Motor neuron (in vitro differentiated cells): ENCODE measurements at regions of chr7 and their contacts with region 1.

Region 1: DNA sequence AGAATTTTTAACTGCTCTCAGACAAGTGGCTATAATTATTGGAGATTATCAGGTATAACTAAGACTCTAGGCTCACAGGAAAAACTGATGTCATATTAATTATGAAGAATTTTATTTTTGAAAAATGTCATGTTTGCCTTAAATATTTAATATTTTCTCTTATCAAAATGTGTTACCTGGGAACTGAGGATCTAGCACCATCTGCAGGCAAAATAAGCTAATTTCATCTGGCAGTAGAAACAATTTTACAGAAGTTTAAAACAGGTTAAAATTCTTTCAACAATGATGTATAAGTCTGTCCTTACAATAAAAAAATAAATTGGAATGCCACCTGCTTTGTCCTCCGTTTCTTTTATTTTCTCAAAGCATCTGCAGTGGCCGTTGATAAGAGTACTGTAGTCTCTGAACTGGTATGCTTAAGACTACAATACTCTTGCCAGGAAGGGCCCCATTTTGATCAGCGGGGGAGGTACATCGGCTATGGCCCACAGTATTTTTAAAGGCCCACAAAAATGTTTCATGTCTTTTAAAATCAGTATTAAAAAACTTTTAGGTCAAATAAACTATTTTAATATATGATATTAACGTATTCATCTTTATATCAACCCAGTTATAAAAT is 81.3 kb downstream of the VWDE start:
- ATAC-seq: no peak
- H3K4me3 ChIP-seq: no peak overlapping the region
- H3K27ac ChIP-seq: no peak overlapping the region
- H3K4me1 ChIP-seq: peaks cover 4 to 14% of the 10 kb centered on the region in 2 donors

Region 2: DNA sequence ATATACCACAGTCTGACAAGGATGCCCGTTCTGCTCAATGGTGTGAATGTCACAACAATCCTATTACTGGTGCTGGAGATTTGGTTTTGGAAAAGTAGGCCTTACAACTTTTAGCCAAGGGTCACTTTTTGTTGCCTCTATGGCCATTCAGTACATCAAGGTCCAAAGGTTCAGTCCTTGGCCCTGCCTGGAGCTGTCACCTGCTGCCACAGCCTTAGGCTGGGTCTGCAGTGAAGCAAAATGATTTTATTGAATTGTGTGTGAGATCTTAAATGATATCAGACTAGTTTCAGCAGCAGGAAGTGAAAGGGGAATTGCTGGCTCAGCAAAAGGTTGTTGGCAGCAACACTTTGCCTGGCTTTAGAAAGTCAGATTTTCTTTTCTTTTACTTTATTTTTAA is 918.0 kb before region 1 on chr7:
- in situ Hi-C with region 1: loop called in 2 of 9 experiments (anchors 25 kb)
- ATAC-seq: no peak
- H3K4me3 ChIP-seq: no peak overlapping the region
- H3K27ac ChIP-seq: no peak overlapping the region
- H3K4me1 ChIP-seq: no peaks in the 10 kb centered on the region

Region 3: DNA sequence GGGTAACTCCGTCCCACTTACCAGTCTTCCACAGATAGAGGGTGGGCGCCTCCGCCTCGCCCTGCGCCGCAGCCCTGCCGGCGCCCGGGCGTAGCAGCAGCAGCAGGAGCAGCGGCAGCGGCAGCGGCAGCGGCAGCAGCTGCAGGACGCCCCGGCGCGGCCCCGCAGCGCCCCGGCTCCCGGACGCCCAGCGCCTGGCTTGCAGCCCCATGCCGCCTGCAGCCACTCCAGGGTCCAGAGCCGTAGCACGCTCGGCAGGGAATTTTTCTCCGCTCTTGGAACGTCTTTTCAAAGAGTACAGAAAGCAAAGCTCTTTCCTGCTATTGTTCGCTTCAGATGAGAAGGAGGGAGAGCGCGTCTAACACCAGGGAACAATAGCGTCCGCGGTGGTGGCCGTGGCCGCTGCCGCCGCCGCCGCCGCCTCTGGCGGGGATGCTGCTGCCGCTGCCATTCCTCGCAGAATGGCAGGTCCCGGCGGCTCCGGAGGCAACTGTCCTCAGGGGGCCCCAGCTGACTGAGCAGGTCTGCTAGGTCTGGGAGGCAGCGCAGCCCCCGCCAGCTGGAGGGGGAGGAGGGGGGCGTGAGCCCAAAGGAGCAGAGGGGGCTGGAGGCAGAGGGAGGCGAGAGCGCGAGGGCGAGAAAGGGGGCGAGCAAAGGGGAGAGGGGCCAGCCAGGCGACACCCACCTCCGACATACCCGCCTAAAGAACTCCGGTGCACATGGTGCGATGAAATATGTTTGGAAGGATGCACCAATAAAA is 490.5 kb before region 1 on chr7 and contains the start of gene THSD7A:
- in situ Hi-C with region 1: loop called in 2 of 9 experiments (anchors 10 to 25 kb)
- ATAC-seq: peak; percentile 84 to 97 (median 87)
- H3K4me3 ChIP-seq: peak within 1 kb of the TSS; percentile 45 to 70 (median 47)
- H3K27ac ChIP-seq: peak within 1 kb of the TSS; percentile 75 to 85
- H3K4me1 ChIP-seq: peaks cover 8 to 36% of the 10 kb centered on the region in 2 donors
- total RNA-seq, gene THSD7A: 1.1 to 24.7 (median 9.6) TPM

Region 4: GRCh38 chr7:12002428-12002827 is 320.0 kb before region 1 on chr7:
- in situ Hi-C with region 1: no loop called
- ATAC-seq: no peak
- H3K4me3 ChIP-seq: no peak overlapping the region
- H3K27ac ChIP-seq: no peak overlapping the region
- H3K4me1 ChIP-seq: no peaks in the 10 kb centered on the region

Region 5: GRCh38 chr7:12067141-12067831 is 255.1 kb before region 1 on chr7:
- in situ Hi-C with region 1: loop called in 3 of 9 experiments (anchors 10 kb)
- ATAC-seq: peak in 5 of 8 experiments; percentile 46 to 92 (median 76)
- H3K4me3 ChIP-seq: no peak overlapping the region
- H3K27ac ChIP-seq: no peak overlapping the region
- H3K4me1 ChIP-seq: no peaks in the 10 kb centered on the region

Region 6: DNA sequence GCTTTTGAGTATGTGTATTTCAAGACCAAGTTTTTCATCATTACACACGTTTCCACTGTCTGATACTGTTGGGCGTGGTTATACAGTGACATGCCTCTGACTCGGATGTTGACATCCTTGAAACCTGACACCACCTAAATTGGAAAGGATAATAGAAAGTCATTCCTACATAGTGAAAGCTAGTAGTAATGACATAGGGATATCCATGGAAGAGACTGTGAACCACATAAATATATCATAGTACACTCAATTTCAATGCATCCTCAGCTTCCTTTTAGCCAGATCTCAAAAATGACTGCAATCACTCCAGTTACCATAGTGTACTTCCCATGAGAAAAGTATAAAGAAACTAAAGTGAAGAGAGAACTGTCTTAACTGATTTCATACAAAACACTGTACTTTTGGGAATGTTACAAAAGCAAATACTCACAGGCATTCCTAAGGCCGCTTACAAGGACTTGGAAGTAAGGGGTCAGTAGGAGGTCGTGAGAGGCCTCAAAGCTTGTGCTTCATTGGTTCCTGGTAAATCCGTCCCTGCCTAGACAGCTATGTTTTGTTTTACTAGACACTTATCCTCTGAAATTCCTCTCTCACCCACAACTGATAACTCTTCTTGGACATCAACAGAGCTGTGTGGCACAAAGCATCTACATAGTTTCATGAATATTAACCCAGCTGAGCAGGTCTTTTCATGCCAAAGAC is 153.1 kb after region 1 on chr7:
- in situ Hi-C with region 1: no loop called
- ATAC-seq: peak in 4 of 8 experiments; percentile 15 to 88 (median 67)
- H3K4me3 ChIP-seq: no peak overlapping the region
- H3K27ac ChIP-seq: no peak overlapping the region
- H3K4me1 ChIP-seq: no peaks in the 10 kb centered on the region